Activated CD4-positive, alpha-beta T cell treated with anti-CD3 and anti-CD28 coated beads for 36 hours (primary cell): ENCODE measurements at regions of chr19 and their contacts with region 1.

Region 1: DNA sequence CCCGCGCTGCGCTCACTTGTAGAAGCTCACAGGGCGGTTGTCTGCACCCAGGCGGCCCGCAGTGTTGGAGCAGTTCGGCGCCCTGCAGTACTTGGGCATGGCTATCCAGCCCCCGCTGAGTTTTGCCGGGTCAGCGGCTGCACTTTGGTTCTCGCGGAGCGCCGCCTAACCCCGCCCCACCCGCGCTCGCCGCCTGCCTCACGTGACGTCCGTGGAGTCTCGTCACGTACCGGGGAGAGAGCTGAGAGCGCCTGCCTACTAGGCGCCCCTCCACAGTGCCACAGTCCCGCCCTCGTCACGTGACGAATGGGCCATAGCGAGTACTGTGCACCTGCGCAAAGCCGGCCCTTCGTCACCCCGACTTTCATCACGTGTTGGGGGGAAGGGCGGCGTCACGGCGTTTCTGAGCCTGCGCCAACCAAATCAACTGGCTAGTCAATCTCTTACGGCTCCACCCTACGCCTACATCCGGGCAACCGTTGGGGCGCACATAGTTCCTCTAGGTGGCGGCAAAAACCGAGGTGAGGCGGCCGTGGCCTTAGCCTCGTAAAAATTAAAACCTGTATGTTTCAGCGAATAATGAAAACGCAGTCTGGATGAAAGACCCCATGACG is at the start of gene THAP8:
- DNase-seq: peak; percentile 100
- ATAC-seq: peak; percentile 91
- H3K4me3 Mint-ChIP-seq: peak within 1 kb of the TSS; percentile 92
- H3K27ac Mint-ChIP-seq: peak within 1 kb of the TSS; percentile 97
- H3K4me1 Mint-ChIP-seq: peaks cover 14% of the 10 kb centered on the region
- H3K27me3 Mint-ChIP-seq: no peaks in the 10 kb centered on the region
- total RNA-seq, gene THAP8: 3.1 to 3.4 TPM

Region 2: GRCh38 chr19:35710784-35711723 is 343.2 kb before region 1 on chr19:
- CTCF ChIA-PET with region 1: no interaction called
- POLR2A ChIA-PET with region 1: no interaction called
- intact Hi-C with region 1: loop called in 1 of 2 experiments (anchors 1 kb)
- DNase-seq: peak; percentile 88
- ATAC-seq: peak; percentile 48
- H3K4me3 Mint-ChIP-seq: peak overlapping the region; percentile 56
- H3K27ac Mint-ChIP-seq: peak overlapping the region; percentile 100
- H3K4me1 Mint-ChIP-seq: peaks cover 43% of the 10 kb centered on the region
- H3K27me3 Mint-ChIP-seq: no peaks in the 10 kb centered on the region

Region 3: DNA sequence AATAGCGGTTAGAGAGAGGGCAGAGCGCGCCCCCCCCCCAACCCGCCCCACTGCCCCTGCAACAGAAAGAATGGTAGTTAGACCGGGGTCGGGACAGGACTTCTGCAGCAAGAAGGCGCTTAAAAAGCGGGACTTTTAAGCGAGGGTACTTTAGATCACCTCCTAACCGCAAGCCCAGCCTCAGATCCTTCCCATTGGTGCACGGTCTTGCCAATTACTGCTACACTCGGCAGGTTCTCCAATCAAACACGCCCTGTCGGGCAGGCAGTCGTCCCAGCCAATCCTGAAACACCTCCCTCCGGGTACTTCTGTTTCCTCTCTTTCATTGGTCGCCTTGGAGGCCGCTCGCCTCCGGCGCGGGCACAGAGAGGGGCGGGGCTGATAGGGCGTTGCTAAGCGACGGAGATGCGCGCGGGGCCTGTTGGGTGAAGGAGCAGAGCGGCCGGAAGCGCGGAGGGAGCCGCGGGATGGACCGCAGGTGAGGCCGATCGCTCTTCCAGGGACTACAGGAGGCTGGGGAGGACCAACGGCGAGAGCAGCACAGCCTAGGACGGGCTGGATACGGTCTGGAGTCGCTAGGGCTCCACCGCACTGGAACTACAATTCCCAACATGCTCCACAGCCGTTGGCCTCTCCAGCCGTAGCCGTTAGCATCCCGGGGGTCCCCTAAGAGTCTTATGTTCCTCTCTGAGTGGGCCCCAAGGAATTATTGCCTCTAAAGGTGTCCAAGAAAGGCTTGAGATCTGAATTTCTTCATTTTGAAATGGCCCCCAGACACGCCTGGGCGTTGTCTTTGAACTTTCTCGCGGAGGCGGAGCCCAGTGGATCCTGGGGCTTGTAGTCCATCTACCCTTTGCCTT is 296.2 kb before region 1 on chr19 and contains the start of gene PROSER3:
- CTCF ChIA-PET with region 1: no interaction called
- POLR2A ChIA-PET with region 1: no interaction called
- intact Hi-C with region 1: loop called in 1 of 2 experiments (anchors 1 kb)
- DNase-seq: peak; percentile 99
- ATAC-seq: peak; percentile 98
- H3K4me3 Mint-ChIP-seq: peak within 1 kb of the TSS; percentile 85
- H3K27ac Mint-ChIP-seq: peak within 1 kb of the TSS; percentile 91
- H3K4me1 Mint-ChIP-seq: peaks cover 29% of the 10 kb centered on the region
- H3K27me3 Mint-ChIP-seq: peaks cover 4% of the 10 kb centered on the region
- total RNA-seq, gene PROSER3: 39.8 to 62.8 TPM

Region 4: DNA sequence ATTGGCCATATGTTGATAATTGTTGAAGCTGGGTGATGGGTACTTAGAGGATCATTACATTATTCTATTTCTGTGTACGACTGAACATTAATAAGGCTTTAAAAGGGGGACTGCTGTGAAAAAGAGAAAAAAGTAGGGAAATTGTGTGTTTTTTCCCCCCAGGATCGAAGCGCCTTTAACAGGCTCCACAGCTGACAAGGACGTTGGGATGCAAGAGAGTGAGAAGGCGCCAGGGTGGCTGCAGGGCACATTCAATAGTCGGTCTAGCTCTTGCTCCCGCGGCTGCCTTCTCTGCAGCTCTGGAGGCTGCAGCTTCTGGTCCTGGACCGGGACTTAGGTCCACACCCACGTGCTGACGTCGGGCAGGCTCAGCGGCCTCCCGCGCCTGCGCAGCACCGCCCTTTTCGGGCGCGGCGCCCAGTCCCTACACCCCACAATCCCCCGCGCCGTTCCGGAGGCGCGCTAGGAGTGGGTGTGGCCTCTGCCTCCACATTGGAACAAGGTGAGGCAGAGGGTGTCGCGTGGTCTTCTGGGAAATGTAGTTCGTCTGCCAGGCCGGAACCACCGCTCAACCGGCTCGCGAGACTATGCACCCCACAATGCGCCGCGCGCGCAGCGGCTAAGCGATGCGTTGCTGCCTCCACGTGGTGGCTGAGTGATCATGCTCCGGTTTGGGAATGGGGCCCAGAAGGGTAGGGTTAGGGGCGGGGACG is 122.9 kb before region 1 on chr19:
- CTCF ChIA-PET with region 1: no interaction called
- POLR2A ChIA-PET with region 1: no interaction called
- intact Hi-C with region 1: loop called in 1 of 2 experiments (anchors 1 kb)
- DNase-seq: peak; percentile 100
- ATAC-seq: peak; percentile 96
- H3K4me3 Mint-ChIP-seq: peak overlapping the region; percentile 67
- H3K27ac Mint-ChIP-seq: peak overlapping the region; percentile 86
- H3K4me1 Mint-ChIP-seq: peaks cover 26% of the 10 kb centered on the region
- H3K27me3 Mint-ChIP-seq: no peaks in the 10 kb centered on the region

Region 5: GRCh38 chr19:36114763-36115452 is 60.7 kb after region 1 on chr19 and contains the start of gene POLR2I:
- CTCF ChIA-PET with region 1: interaction called, 3 read pairs
- POLR2A ChIA-PET with region 1: interaction called, 5 read pairs
- intact Hi-C with region 1: loop called (anchors 1 kb)
- DNase-seq: peak; percentile 99
- ATAC-seq: peak; percentile 95
- H3K4me3 Mint-ChIP-seq: peak within 1 kb of the TSS; percentile 98
- H3K27ac Mint-ChIP-seq: peak within 1 kb of the TSS; percentile 93
- H3K4me1 Mint-ChIP-seq: peaks cover 29% of the 10 kb centered on the region
- H3K27me3 Mint-ChIP-seq: no peaks in the 10 kb centered on the region
- total RNA-seq, gene POLR2I: 89.6 to 97.3 TPM

Region 6: GRCh38 chr19:36378625-36379509 is 324.6 kb after region 1 on chr19 and contains the start of gene ZFP14:
- CTCF ChIA-PET with region 1: no interaction called
- POLR2A ChIA-PET with region 1: no interaction called
- intact Hi-C with region 1: loop called in 1 of 2 experiments (anchors 5 kb)
- DNase-seq: peak; percentile 97
- ATAC-seq: peak; percentile 99
- H3K4me3 Mint-ChIP-seq: peak within 1 kb of the TSS; percentile 93
- H3K27ac Mint-ChIP-seq: peak within 1 kb of the TSS; percentile 88
- H3K4me1 Mint-ChIP-seq: peaks cover 18% of the 10 kb centered on the region
- H3K27me3 Mint-ChIP-seq: no peaks in the 10 kb centered on the region
- total RNA-seq, gene ZFP14: 1.4 to 1.8 TPM

Region 7: GRCh38 chr19:36688058-36688457 is 633.8 kb after region 1 on chr19:
- CTCF ChIA-PET with region 1: no interaction called
- POLR2A ChIA-PET with region 1: no interaction called
- intact Hi-C with region 1: no loop called
- DNase-seq: peak; percentile 21
- ATAC-seq: peak; percentile 2
- H3K4me3 Mint-ChIP-seq: peak overlapping the region; percentile 99
- H3K27ac Mint-ChIP-seq: peak overlapping the region; percentile 96
- H3K4me1 Mint-ChIP-seq: peaks cover 27% of the 10 kb centered on the region
- H3K27me3 Mint-ChIP-seq: no peaks in the 10 kb centered on the region